GM10248 (cell line): ENCODE measurements at regions of chr12 and their contacts with region 1.

Region 1: DNA sequence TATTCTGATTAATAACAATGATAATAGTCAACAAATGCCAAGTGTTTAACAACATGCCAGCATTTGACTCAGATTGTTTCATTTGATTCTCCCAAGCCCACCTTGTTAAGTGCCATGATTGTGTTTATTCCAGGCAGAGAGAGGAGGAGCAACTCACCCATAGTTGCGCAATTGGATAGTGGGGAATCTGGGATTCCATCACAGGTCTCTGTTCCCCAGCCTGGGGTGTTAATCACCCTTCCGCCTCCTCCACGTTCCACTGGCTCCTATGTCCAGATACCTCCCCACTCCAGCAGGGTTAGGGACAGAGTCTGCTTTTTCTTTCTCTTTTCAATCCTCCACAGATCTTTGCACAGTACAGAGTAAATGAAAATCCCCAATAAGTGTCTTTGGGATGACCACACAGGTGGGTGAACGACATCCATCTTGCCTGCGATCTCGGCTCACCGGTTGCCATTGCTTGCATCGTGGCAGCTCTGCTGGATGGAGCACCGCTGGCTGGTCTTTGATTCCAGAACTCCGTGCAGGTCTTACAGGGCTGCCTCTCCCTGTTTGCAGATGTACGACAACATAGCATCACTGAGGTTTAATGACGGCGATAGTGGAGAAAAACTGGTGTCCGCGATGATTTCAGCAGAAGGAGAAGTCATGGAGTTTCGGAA is 78.8 kb downstream of the DNAH10 start:
- DNase-seq: no peak
- CTCF ChIP-seq: no peak

Region 2: DNA sequence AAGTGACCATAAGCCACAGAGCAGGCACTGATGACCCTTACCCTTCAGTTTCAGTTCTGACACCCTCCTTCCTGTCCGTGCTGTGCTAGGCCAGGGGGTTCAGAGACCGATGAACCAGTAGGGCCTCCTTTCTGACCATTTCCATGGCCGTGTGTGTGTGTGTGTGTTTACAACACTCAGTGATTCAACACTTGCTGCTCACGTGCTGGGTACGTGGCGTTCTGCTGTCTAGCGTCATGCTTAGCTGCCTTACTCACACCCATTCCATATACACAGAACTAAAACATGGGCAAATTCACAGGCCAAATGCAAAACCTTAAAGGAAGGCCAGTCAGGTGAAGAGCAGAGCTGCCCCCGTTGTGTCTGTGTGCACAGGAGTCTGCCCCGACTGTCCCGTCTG is 11.3 kb before region 1 on chr12:
- CTCF ChIA-PET with region 1: interaction called, 12 read pairs
- POLR2A ChIA-PET with region 1: no interaction called
- DNase-seq: no peak
- CTCF ChIP-seq: no peak

Region 3: DNA sequence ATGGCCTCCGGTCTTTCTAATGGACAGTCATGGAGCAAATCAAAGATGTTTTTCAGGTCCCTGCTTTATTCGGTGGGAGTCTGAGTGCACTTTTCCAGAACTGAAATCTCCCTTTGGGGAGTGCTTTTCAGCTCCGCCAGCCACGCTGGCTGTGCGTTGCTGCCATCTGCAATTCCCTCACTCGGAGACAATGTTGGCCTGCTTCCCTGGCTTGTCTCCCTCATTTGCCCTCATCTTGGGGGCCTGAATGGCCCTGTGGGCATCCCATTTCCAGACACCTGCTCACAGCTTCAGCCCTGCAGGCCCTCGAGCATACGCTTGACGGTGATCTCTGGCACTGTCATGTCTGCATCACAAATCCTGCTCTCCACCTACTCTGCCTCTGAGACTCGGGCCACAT is 27.9 kb after region 1 on chr12:
- CTCF ChIA-PET with region 1: no interaction called
- POLR2A ChIA-PET with region 1: no interaction called
- DNase-seq: no peak
- CTCF ChIP-seq: no peak

Region 4: DNA sequence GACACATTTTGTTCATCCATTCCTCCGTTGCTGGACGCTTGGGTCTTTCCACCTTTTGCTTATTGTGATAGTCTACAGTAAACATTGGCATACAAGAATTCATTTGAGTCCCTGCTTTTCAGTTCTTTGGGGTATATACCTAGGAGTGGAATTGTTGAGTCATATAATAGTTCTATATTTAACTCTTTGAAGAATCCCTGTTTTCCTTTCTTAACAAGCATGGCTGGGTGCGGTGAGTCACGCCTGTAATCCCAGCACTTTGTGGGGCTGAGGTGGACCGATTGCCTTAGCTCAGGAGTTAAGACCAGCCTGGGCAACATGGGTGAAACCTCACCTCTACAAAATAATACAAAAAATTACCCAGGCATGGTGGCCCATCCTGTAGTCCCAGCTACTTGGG is 56.3 kb after region 1 on chr12:
- CTCF ChIA-PET with region 1: no interaction called
- POLR2A ChIA-PET with region 1: no interaction called
- DNase-seq: no peak
- CTCF ChIP-seq: no peak

Region 5: DNA sequence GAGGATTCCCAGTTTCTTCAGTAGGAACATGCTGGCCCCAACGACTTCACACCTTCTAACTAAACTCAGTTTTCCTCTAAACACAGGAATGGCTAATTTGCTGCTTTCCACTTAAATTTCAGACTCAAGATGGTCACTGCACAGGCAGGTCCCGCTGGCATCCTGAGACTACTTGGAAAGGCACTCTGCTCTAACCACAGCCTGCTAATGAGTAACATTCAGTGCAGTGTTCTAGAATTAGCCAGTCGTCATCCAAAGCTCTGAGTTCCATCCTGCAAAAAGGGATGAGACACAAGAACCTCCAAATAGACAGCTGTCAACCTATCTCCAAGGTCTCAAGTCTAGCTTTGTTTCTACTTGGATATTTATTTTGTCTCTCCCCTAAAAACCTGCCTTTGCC is 125.7 kb after region 1 on chr12:
- CTCF ChIA-PET with region 1: no interaction called
- POLR2A ChIA-PET with region 1: no interaction called
- DNase-seq: no peak
- CTCF ChIP-seq: no peak